ENCODE measurements at regions of chr11 and their contacts with region 1.

Region 1: GRCh38 chr11:113176599-113177365 is 137.6 kb upstream of the TTC12 start:
- DNase-seq: no peak
- H3K4me3 ChIP-seq: no peak overlapping the region
- H3K27ac ChIP-seq: no peak overlapping the region
- H3K4me1 ChIP-seq: no peaks in the 10 kb centered on the region
- H3K27me3 ChIP-seq: no peaks in the 10 kb centered on the region
- CTCF ChIP-seq: no peak
- EP300 ChIP-seq: no peak
- POLR2A ChIP-seq: no peak

Region 2: DNA sequence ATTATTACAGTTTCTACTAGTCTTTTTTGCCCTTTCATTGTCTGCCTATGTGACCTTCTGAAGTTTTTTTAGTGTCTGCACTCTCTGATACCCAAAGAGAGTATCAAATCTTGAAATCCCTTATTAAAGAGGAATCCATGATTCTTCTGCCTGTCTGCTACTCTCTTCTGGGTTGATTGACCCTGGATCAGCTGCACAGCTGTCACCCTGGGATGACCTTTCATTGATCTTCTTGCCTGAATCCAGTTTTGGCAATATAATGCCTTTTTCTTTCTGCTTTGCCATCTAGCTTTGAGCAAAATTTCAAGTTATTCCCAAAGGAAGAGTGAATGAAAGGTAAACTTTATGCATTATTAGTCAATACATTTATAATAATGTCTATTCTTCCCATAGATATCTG is 183.0 kb before region 1 on chr11:
- in situ Hi-C with region 1: no loop called
- intact Hi-C with region 1: no loop called
- DNase-seq: no peak
- H3K4me3 ChIP-seq: no peak overlapping the region
- H3K27ac ChIP-seq: no peak overlapping the region
- H3K4me1 ChIP-seq: no peaks in the 10 kb centered on the region
- H3K27me3 ChIP-seq: no peaks in the 10 kb centered on the region
- CTCF ChIP-seq: no peak
- EP300 ChIP-seq: no peak
- POLR2A ChIP-seq: no peak

Region 3: GRCh38 chr11:113113801-113114706 is 62.7 kb before region 1 on chr11:
- in situ Hi-C with region 1: loop called in 1 of 4 experiments (anchors 10 kb)
- intact Hi-C with region 1: no loop called
- DNase-seq: peak; percentile 27
- H3K4me3 ChIP-seq: no peak overlapping the region
- H3K27ac ChIP-seq: no peak overlapping the region
- H3K4me1 ChIP-seq: peaks cover 0 to 8% (median 0%) of the 10 kb centered on the region in 4 donors
- H3K27me3 ChIP-seq: no peaks in the 10 kb centered on the region
- CTCF ChIP-seq: peak; percentile 37 to 65 (median 48)
- EP300 ChIP-seq: no peak
- POLR2A ChIP-seq: no peak

Measured in transverse colon (tissue), 4 donors.